ENCODE measurements at regions of chr1 and their contacts with region 1.

Region 1: GRCh38 chr1:92960395-92961130 is 699 bp downstream of the DIPK1A start:
- DNase-seq: peak; percentile 72
- ATAC-seq: peak; percentile 66
- H3K4me3 ChIP-seq: peak overlapping the region; percentile 97
- H3K27ac ChIP-seq: peak overlapping the region; percentile 91
- H3K4me1 ChIP-seq: peaks cover 40% of the 10 kb centered on the region
- H3K27me3 ChIP-seq: no peaks in the 10 kb centered on the region
- CTCF ChIP-seq: peak; percentile 65 to 91 (median 79)
- EP300 ChIP-seq: no peak
- POLR2A ChIP-seq: no peak
- RAD21 ChIP-seq: peak; percentile 94

Region 2: GRCh38 chr1:92858564-92859399 is 101.8 kb before region 1 on chr1:
- CTCF ChIA-PET with region 1: interaction called, 169 read pairs
- POLR2A ChIA-PET with region 1: interaction called, 7 read pairs
- RAD21 ChIA-PET with region 1: interaction called, 106 read pairs
- SMC1A ChIA-PET with region 1: interaction called, 179 read pairs
- in situ Hi-C with region 1: no loop called
- intact Hi-C with region 1: loop called (anchors 1 kb)
- DNase-seq: peak; percentile 59
- ATAC-seq: peak; percentile 90
- H3K4me3 ChIP-seq: no peak overlapping the region
- H3K27ac ChIP-seq: no peak overlapping the region
- H3K4me1 ChIP-seq: peaks cover 9% of the 10 kb centered on the region
- H3K27me3 ChIP-seq: no peaks in the 10 kb centered on the region
- CTCF ChIP-seq: peak; percentile 78 to 99 (median 96)
- EP300 ChIP-seq: no peak
- POLR2A ChIP-seq: no peak
- RAD21 ChIP-seq: peak; percentile 100

Region 3: GRCh38 chr1:92913093-92913819 is 47.3 kb before region 1 on chr1:
- CTCF ChIA-PET with region 1: interaction called, 10 read pairs
- POLR2A ChIA-PET with region 1: interaction called, 5 read pairs
- RAD21 ChIA-PET with region 1: interaction called, 4 read pairs
- SMC1A ChIA-PET with region 1: interaction called, 4 read pairs
- in situ Hi-C with region 1: no loop called
- intact Hi-C with region 1: no loop called
- DNase-seq: no peak
- ATAC-seq: no peak
- H3K4me3 ChIP-seq: no peak overlapping the region
- H3K27ac ChIP-seq: no peak overlapping the region
- H3K4me1 ChIP-seq: no peaks in the 10 kb centered on the region
- H3K27me3 ChIP-seq: no peaks in the 10 kb centered on the region
- CTCF ChIP-seq: no peak
- EP300 ChIP-seq: no peak
- POLR2A ChIP-seq: no peak
- RAD21 ChIP-seq: no peak

Region 4: DNA sequence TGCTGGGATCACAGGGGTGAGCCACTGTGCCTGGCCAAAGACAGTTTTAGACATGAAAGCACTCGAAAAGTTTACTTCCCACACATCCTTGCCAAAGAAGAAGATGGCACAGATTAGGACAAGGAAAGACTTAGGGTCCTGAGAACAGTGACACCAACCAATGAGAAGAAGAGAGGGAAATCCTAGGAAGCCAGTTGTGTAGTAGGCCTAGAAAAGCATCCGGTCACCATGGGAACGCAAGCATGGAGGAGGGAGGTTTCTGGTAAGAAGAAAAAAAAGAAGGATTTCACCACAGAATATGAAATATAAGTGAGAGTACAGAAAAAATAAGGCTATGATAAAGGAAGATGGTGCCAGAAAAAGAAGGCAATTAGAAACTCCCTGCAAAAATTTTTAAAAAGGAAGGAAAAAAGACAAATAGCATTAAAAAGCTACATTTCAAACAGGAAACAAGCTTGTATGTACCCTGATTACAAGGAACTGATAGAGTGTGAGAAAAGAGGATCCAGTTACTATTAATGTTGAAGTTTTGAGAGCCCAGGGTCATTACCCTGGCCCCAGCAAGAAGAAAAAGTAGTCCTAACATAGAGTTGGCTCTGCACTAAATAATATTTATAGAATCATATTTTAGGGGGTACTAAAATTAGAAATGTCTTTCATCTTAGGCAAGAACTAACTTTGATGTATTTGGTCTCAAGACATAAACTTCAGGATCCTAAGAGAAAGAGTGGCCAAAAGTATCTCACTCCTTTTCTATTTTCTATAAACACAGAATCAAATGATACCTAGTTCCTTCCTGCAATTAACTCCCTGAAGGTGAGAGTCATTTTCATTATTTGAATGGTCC is 15.4 kb before region 1 on chr1:
- CTCF ChIA-PET with region 1: interaction called, 31 read pairs
- POLR2A ChIA-PET with region 1: interaction called, 43 read pairs
- RAD21 ChIA-PET with region 1: interaction called, 107 read pairs
- SMC1A ChIA-PET with region 1: interaction called, 154 read pairs
- in situ Hi-C with region 1: no loop called
- intact Hi-C with region 1: no loop called
- DNase-seq: no peak
- ATAC-seq: peak; percentile 73
- H3K4me3 ChIP-seq: peak overlapping the region; percentile 22; the same call in 1 of the 2 replicates
- H3K27ac ChIP-seq: peak overlapping the region; percentile 3
- H3K4me1 ChIP-seq: peaks cover 29% of the 10 kb centered on the region
- H3K27me3 ChIP-seq: no peaks in the 10 kb centered on the region
- CTCF ChIP-seq: no peak
- EP300 ChIP-seq: no peak
- POLR2A ChIP-seq: no peak
- RAD21 ChIP-seq: no peak

Region 5: GRCh38 chr1:92980732-92981647 is 20.4 kb after region 1 on chr1:
- CTCF ChIA-PET with region 1: interaction called, 109 read pairs
- POLR2A ChIA-PET with region 1: interaction called, 103 read pairs
- RAD21 ChIA-PET with region 1: interaction called, 204 read pairs
- SMC1A ChIA-PET with region 1: interaction called, 163 read pairs
- in situ Hi-C with region 1: no loop called
- intact Hi-C with region 1: no loop called
- DNase-seq: no peak
- ATAC-seq: peak; percentile 57
- H3K4me3 ChIP-seq: peak overlapping the region; percentile 33; the same call in 1 of the 2 replicates
- H3K27ac ChIP-seq: peak overlapping the region; percentile 75
- H3K4me1 ChIP-seq: peaks cover 20% of the 10 kb centered on the region
- H3K27me3 ChIP-seq: no peaks in the 10 kb centered on the region
- CTCF ChIP-seq: no peak
- EP300 ChIP-seq: no peak
- POLR2A ChIP-seq: no peak
- RAD21 ChIP-seq: no peak

Region 6: DNA sequence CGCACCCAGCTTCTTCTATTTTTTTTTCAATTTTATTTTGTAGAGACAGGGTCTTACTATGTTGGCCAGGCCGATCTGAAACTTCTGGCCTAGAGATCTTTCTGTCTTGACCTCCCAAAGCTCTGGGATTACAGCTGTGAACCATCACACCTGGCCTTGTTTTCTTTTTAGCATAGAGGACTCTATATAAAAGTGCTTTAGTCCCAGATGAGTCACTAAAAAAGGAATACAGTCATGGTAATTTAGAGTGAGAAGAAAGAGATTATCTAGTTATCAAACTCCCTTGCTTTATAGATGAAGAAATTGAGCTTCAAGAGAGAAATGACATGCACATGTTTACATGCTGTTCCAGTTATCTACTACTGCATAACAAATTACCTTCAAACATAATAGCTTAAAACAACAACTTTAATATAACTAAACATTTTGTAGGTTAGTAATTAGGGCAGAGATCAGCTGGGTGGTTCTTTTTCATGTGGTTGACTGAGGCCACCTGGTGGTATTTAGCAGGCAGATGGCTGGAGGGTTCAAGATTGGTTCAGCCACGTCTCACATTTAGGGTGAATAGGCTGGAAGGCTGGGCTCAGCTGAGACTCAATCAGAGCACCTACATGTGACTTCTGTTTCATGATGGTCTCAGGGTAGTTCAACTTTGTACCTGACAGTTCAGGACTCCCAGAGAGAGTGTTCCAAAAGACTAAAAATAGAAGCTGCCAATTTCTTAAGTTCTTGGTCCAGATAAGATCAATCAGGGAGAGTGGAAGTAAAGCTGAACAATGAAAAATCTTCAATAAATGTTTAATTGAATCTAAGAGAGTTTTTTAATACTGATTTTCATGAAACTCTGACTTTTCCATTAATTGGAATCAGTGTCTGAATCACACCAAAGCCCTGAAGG is 101.6 kb after region 1 on chr1:
- CTCF ChIA-PET with region 1: interaction called, 11 read pairs
- POLR2A ChIA-PET with region 1: no interaction called
- RAD21 ChIA-PET with region 1: interaction called, 5 read pairs
- SMC1A ChIA-PET with region 1: interaction called, 5 read pairs
- in situ Hi-C with region 1: no loop called
- intact Hi-C with region 1: no loop called
- DNase-seq: no peak
- ATAC-seq: peak; percentile 99
- H3K4me3 ChIP-seq: no peak overlapping the region
- H3K27ac ChIP-seq: no peak overlapping the region
- H3K4me1 ChIP-seq: no peaks in the 10 kb centered on the region
- H3K27me3 ChIP-seq: no peaks in the 10 kb centered on the region; a peak in 1 of 4 replicates
- CTCF ChIP-seq: peak; percentile 67 to 83 (median 72)
- EP300 ChIP-seq: no peak
- POLR2A ChIP-seq: no peak
- RAD21 ChIP-seq: peak; percentile 90

Region 7: GRCh38 chr1:93179886-93180722 is 219.5 kb after region 1 on chr1 and contains the start of gene TMED5:
- CTCF ChIA-PET with region 1: no interaction called
- POLR2A ChIA-PET with region 1: interaction called, 3 read pairs
- RAD21 ChIA-PET with region 1: no interaction called
- SMC1A ChIA-PET with region 1: no interaction called
- in situ Hi-C with region 1: no loop called
- intact Hi-C with region 1: loop called (anchors 5 kb)
- DNase-seq: peak; percentile 90
- ATAC-seq: peak; percentile 88
- H3K4me3 ChIP-seq: peak within 1 kb of the TSS; percentile 95
- H3K27ac ChIP-seq: peak within 1 kb of the TSS; percentile 99
- H3K4me1 ChIP-seq: no peaks in the 10 kb centered on the region; the same call in 1 of the 2 replicates
- H3K27me3 ChIP-seq: no peaks in the 10 kb centered on the region
- CTCF ChIP-seq: peak in 2 of 3 experiments; percentile 1 to 9; a peak in 2 of 6 replicates
- EP300 ChIP-seq: no peak; a peak in 1 of 4 replicates
- POLR2A ChIP-seq: peak; percentile 70
- RAD21 ChIP-seq: no peak
- polyA plus RNA-seq, gene TMED5: 18.5 to 19.9 TPM

Region 8: GRCh38 chr1:93244298-93245069 is 283.9 kb after region 1 on chr1:
- CTCF ChIA-PET with region 1: no interaction called
- POLR2A ChIA-PET with region 1: no interaction called
- RAD21 ChIA-PET with region 1: no interaction called
- SMC1A ChIA-PET with region 1: no interaction called
- in situ Hi-C with region 1: no loop called
- intact Hi-C with region 1: no loop called
- DNase-seq: no peak
- ATAC-seq: no peak
- H3K4me3 ChIP-seq: no peak overlapping the region
- H3K27ac ChIP-seq: no peak overlapping the region
- H3K4me1 ChIP-seq: no peaks in the 10 kb centered on the region
- H3K27me3 ChIP-seq: no peaks in the 10 kb centered on the region
- CTCF ChIP-seq: no peak
- EP300 ChIP-seq: no peak
- POLR2A ChIP-seq: no peak
- RAD21 ChIP-seq: no peak

Region 9: DNA sequence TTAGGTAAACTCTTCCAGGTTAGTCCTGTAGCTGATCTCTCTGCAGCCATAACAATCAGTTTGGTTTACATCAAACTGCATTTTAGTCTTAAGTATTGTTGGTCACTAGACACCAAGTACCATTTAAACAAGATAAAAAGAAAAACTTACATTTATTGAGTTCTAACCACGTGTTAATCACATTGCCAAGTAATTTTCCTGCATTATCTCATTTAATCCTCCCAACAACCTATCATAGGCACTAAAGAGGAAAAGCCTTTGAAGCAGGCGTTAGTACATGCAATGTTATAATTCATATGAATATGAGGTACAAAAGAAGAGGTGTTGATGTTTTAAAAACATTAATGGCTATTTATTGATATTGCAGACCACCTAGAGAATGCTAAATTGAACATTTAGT is 394.2 kb after region 1 on chr1:
- CTCF ChIA-PET with region 1: no interaction called
- POLR2A ChIA-PET with region 1: no interaction called
- RAD21 ChIA-PET with region 1: no interaction called
- SMC1A ChIA-PET with region 1: no interaction called
- in situ Hi-C with region 1: no loop called
- intact Hi-C with region 1: no loop called
- DNase-seq: no peak
- ATAC-seq: no peak
- H3K4me3 ChIP-seq: no peak overlapping the region
- H3K27ac ChIP-seq: no peak overlapping the region
- H3K4me1 ChIP-seq: no peaks in the 10 kb centered on the region; the same call in none of the 2 replicates
- H3K27me3 ChIP-seq: no peaks in the 10 kb centered on the region
- CTCF ChIP-seq: no peak
- EP300 ChIP-seq: no peak
- POLR2A ChIP-seq: no peak
- RAD21 ChIP-seq: no peak